Posterior vena cava (tissue), 2 donors: ENCODE measurements at regions of chr16 and their contacts with region 1.

Region 1: DNA sequence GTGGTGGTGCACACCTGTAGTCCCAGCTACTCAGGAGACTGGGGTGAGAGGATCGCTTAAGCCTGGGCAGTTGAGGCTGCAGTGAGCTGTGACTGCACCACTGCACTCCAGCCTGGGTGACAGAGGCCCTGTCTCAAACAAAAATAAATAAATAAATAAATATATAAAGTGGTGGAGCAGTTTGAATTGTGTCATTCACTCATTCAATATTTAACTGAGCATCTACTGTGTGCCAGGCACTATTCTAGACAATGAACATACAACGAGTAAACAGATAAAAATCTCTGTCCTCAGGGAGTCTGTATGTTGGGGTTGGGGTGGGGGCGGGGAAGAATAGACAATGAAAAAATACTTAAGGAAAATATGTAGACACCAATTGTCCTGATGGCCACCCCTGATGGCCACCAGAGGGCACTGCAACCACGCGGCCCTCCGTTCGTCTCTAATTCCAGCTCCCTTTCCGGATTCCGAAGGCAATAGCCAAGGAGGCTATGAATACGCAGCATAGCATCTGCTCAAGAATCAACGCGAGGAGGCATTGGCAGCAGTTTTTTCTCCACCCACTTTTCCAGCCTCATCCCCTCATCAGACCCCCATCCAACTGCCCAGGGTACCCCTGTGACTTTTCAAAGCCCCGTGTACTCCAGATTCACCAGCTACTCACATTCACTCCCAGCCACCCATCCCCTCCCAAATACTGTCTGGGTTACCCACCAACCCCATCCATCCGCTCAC is 21.4 kb downstream of the QPRT start:
- DNase-seq: peak; percentile 93

Region 2: DNA sequence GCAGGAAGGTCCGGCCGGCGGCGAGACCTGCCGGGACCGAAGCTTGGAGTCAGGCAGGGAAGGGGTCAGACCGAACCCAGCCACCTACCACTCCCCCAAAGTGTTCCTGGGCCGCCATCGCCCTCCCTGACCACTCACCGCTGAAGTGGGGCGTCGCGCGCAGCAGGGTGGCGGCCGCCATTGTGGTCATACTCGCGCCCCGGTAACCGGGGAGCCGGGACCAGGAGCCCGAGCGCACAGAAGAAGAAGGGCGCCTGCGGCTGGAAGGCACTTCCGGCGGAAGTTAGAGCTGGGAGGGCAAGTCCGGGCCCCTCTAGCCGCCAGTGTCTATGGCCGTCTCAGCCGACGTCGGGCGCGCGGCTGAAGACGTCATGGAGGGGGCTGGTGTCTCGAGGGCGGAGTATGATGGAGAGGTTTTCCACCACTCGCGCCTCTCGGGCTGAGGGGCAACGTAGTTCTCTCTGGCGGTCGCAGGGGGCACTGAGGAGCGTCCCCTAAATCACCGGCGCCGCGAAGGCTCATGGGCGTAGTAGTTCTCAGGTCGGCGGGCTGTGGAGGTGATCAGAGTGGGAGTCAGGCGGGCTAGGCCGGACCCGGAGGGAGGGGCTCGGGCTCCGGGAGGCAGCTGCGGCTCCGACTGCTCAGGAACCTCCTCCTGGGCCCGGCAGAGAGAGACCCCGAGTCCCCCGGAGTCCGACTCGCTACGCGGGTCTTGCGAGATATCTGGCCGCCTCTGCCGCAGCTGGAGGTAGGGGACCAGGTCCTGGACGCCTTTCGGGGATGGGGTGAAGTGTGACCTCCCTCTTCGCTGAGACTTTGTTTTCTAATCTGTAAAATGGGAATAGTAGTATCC is 854.1 kb before region 1 on chr16 and contains the start of gene TUFM:
- intact Hi-C with region 1: no loop called
- DNase-seq: peak; percentile 99
- total RNA-seq, gene TUFM: 74.4 to 76.2 TPM

Region 3: GRCh38 chr16:29641561-29641960 is 58.9 kb before region 1 on chr16:
- intact Hi-C with region 1: no loop called
- DNase-seq: no peak

Region 4: DNA sequence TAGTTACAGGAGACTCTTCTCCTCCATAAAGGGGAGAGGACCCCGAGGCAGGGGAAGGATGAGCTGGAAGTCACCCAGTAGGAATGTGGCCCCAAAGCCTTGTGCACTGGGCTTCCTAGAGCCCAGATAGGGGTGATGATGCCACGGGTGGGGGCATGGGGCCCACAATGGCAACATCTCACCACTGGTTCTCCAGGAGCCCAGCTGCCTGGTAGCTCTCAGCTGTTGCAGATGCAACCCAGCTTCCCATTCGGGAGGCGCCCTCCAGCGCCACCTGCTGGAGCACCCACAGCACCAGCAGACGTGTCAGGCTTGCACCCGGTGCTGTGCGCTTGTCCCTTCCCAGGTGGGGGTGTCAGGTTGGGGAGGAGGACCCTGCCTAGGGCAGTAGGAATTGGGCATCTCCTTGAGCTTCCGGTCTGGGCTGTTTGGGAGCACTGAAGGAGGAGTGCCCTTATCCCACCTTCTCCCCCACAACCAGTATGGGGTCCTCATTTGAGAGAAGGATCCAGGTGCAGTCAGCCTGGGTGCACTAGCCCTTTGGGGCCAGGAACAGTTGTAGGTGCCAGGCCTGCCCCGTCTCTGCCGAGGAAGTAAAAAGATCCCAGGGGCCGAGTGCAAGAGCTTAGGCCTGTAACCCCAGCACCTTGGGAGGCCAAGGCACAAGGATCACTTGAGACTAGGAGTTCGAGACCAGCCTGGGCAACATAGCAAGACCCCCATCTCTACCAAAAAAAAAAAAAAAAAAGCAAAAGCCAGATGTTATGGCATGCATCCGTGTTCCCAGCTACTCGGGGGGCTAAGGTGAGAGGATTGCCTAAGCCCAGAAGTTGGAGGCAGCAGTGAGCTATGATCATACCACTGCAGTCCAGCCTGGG is 148.2 kb after region 1 on chr16:
- intact Hi-C with region 1: loop called in 1 of 2 experiments (anchors 10 kb)
- DNase-seq: peak; percentile 94